HEK293 (cell line): ENCODE measurements at regions of chr12 and their contacts with region 1.

Region 1: GRCh38 chr12:71415336-71416231 is 24.0 kb upstream of the LGR5 start:
- H3K4me3 ChIP-seq: no peak overlapping the region
- H3K27ac ChIP-seq: no peak overlapping the region
- H3K4me1 ChIP-seq: no peaks in the 10 kb centered on the region
- CTCF ChIP-seq: peak; percentile 52

Region 2: GRCh38 chr12:71157601-71158233 is 257.9 kb before region 1 on chr12 and contains the start of gene TSPAN8:
- CTCF ChIA-PET with region 1: no interaction called
- POLR2A ChIA-PET with region 1: no interaction called
- H3K4me3 ChIP-seq: no peak within 1 kb of the TSS
- H3K27ac ChIP-seq: no peak within 1 kb of the TSS
- H3K4me1 ChIP-seq: peaks cover 6% of the 10 kb centered on the region; the same call in 1 of the 2 replicates
- CTCF ChIP-seq: no peak

Region 3: DNA sequence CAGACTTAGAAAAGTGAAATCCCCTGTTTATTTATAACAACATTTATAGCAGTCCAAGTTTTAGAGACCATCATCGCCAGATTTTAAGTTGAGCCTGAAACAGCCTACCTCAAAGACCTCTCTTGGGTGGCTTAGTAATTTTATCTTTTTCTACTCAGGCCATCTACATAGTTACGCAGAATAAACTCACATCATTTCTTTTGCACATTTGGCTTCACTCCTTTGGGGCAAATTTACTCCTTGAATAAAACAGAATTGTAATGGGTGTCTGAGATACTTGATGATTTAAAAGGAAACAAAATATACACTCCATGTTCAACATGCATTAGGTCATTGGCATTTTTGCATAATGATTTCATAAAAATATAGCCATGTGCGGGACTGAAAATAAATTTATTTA is 153.1 kb before region 1 on chr12:
- CTCF ChIA-PET with region 1: no interaction called
- POLR2A ChIA-PET with region 1: no interaction called
- H3K4me3 ChIP-seq: no peak overlapping the region
- H3K27ac ChIP-seq: no peak overlapping the region
- H3K4me1 ChIP-seq: no peaks in the 10 kb centered on the region
- CTCF ChIP-seq: no peak

Region 4: GRCh38 chr12:71385155-71385554 is 30.4 kb before region 1 on chr12:
- CTCF ChIA-PET with region 1: no interaction called
- POLR2A ChIA-PET with region 1: no interaction called
- H3K4me3 ChIP-seq: no peak overlapping the region
- H3K27ac ChIP-seq: no peak overlapping the region
- H3K4me1 ChIP-seq: no peaks in the 10 kb centered on the region
- CTCF ChIP-seq: no peak

Region 5: DNA sequence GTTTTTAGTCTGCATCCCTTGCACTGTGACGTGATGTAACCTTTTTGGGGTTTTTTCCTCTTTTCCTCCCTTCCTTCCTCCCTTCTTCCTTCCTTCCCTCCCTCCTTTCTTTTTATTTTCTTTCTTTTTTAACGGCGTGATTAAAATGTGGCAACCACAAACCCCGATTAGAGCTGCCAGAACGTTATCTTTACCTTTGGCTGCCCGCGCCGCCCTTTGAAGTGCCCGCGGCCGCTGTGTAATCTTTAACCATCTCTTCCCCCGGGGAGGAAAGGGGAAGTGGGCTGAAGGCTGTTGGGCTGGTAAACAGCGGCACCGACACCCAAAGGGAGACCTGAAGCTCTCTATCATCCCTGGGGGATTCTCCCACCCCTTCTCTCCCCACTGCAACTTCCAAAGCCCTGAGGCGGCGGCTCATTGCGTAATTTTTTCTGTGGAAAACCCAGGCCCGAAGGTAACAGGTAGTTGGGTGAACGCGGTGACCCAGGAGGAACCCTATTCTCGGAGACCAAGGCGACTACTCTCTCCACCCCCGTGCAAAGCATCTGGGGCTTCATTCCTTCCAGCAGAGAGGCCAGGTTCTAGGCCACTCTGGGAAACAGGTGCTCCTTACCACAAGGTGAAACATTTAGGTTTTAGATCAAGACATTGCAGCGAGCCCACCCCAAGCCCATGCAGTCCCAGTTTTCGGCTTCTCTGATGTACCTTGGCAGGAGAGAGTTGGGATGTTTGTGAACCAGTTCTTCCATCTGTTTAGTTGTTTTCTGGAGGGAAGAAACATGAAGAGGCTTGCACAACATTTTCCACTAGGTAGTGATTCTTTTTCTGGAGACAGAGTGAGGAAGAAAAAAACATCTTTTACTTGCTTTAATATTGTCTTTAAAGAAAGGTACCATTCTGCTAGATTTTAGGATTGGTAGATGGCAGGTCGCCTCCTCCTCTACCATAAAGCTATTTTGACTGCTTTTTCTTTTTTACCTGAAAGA is 25.5 kb after region 1 on chr12:
- CTCF ChIA-PET with region 1: interaction called, 10 read pairs
- POLR2A ChIA-PET with region 1: no interaction called
- H3K4me3 ChIP-seq: peak overlapping the region; percentile 75
- H3K27ac ChIP-seq: peak overlapping the region; percentile 88; the same call in 1 of the 2 replicates
- H3K4me1 ChIP-seq: peaks cover 9% of the 10 kb centered on the region; the same call in 1 of the 2 replicates
- CTCF ChIP-seq: no peak

Region 6: GRCh38 chr12:71551529-71551928 is 135.9 kb after region 1 on chr12:
- CTCF ChIA-PET with region 1: interaction called, 18 read pairs
- POLR2A ChIA-PET with region 1: no interaction called
- H3K4me3 ChIP-seq: no peak overlapping the region
- H3K27ac ChIP-seq: no peak overlapping the region
- H3K4me1 ChIP-seq: no peaks in the 10 kb centered on the region
- CTCF ChIP-seq: peak; percentile 36; the same call in 1 of the 2 replicates

Region 7: GRCh38 chr12:71636704-71637115 is 221.1 kb after region 1 on chr12:
- CTCF ChIA-PET with region 1: interaction called, 39 read pairs
- POLR2A ChIA-PET with region 1: no interaction called
- H3K4me3 ChIP-seq: no peak overlapping the region
- H3K27ac ChIP-seq: no peak overlapping the region
- H3K4me1 ChIP-seq: no peaks in the 10 kb centered on the region
- CTCF ChIP-seq: 0 out of 2 replicates have a peak, but pooled peaks have one; percentile 7

Region 8: DNA sequence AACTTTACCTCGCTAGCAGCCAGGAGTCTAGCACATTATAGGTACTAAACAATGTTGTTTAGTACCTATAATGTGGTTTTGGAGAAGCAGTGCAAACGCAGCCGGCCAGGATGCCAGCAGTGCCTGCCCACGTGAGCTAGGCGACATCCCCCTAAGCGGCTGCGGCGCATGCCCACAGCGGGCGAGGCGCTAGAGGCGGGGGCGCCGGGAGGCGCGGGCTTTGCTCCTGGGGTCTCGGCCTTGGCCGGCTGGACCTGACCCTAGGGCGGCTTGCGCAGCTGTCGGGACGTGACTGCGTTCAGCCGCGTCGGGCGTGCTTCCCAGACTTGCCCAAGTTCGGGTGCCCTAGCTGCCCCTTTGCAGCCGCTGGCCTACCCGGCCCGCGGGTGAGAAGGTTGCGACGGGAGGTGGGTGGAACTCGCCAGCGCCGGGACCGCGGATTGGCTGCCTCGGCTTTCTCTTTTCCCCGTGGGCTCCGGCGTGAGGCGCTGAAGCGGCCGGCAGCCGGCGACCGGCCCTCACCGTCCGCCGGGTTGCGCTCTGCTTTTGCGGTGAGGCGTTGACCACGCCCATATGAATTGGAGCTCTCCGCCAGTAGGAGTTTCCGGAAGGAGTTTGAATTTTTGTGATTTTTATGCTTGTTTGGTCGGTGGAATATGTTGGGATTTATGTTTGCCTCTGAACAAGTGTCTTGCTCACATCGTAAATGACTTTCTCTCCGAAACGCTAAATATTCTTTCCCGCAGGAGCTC is 270.5 kb after region 1 on chr12 and contains the start of gene TMEM19:
- CTCF ChIA-PET with region 1: no interaction called
- POLR2A ChIA-PET with region 1: no interaction called
- H3K4me3 ChIP-seq: peak within 1 kb of the TSS; percentile 97
- H3K27ac ChIP-seq: peak within 1 kb of the TSS; percentile 83
- H3K4me1 ChIP-seq: no peaks in the 10 kb centered on the region
- CTCF ChIP-seq: no peak; the same call in none of the 2 replicates

Region 9: GRCh38 chr12:71746983-71747611 is 331.5 kb after region 1 on chr12:
- CTCF ChIA-PET with region 1: interaction called, 18 read pairs
- POLR2A ChIA-PET with region 1: no interaction called
- H3K4me3 ChIP-seq: no peak overlapping the region
- H3K27ac ChIP-seq: no peak overlapping the region
- H3K4me1 ChIP-seq: no peaks in the 10 kb centered on the region
- CTCF ChIP-seq: peak; percentile 25; the same call in 1 of the 2 replicates